Sciatic nerve (tissue), 2 donors: ENCODE measurements at regions of chr12 and their contacts with region 1.

Region 1: DNA sequence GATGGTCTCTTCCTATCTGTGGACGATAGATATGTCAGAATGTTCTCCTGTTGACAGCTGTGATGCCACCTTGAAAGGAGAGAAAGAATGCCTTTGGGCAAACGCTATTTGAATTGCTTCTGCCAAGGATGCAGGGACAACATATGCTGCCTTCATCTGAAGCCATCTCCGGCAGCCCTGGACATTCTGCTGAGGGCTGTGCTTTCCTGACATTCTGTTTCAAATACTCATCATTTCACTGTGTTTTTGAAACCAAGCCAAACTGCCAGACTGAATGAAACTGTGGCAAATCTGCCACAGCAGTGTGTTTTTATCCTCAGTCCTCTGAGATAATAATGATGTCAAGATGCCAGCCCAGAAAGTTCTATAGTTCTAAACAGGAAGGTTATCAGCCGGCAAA is 85.8 kb upstream of the BCAT1 start:
- DNase-seq: no peak
- ATAC-seq: no peak

Region 2: GRCh38 chr12:23659131-23659530 is 1375.5 kb before region 1 on chr12:
- intact Hi-C with region 1: loop called (anchors 5 kb)
- DNase-seq: no peak
- ATAC-seq: no peak